Sciatic nerve (tissue), 2 donors: ENCODE measurements at regions of chr11 and their contacts with region 1.

Region 1: DNA sequence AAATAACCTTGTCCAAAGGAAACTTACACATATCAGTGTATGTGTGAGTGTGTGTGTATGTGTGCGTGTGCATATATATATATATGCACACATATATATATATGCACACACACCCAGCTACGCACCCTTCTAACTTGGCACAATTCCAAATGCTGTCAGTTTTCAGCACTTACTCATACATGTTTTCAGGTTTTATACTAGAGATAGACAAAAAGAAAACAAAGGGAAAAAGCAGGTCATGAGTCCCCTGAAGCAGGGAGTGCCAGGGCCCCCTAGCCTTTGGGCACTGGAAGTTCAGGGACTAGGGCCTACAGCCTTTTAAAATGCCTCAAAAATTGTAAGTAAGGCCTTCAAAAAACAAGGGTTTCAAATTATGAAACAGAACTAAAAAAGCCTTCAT is 265.4 kb downstream of the CADM1 start:
- DNase-seq: no peak
- ATAC-seq: no peak

Region 2: GRCh38 chr11:115008799-115009198 is 230.0 kb before region 1 on chr11:
- intact Hi-C with region 1: no loop called
- DNase-seq: no peak
- ATAC-seq: no peak

Region 3: DNA sequence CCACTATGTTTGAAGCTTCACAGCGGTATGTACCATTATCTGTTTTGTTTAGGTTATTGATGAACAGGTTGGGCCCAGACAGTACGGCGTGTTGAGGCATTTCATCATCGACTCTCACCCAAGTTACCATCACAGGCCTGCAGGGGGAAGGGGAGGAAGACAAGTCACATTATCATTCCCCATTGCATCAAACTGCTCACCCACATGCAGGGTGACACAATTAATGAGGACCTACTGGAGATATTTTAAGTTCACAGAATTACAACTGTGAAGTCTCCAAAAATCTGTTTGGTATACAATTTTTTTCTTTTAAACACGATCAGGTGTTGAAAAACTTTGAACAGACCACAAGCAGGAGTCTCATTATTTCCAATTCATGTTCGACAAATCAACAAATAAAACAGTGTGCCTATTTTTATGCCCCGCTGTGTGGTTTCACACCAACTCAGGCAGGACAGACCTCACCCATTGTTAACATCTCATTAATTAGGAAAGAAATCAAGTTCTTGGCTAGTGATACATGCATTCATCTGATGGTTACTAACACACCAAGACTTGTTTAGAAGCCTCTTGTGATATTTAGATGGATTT is 24.1 kb before region 1 on chr11:
- intact Hi-C with region 1: loop called (anchors 1 kb)
- DNase-seq: no peak
- ATAC-seq: no peak